Activated T-helper 2 cell treated with anti-CD3 and anti-CD28 coated beads, Interferon-gamma antibody, Interleukin-2, Interleukin-4, amounts not matched to agents 10 μg/mL and 5 μg/mL and 100 μg/mL, durations not matched to agents 14 hours and 24 hours and 36 hours (primary cell): ENCODE measurements at regions of chr5 and their contacts with region 1.

Region 1: GRCh38 chr5:78984439-78985115 is 533 bp downstream of the ARSB start:
- DNase-seq: peak; percentile 80
- H3K4me3 Mint-ChIP-seq: peak overlapping the region; percentile 85
- H3K27ac Mint-ChIP-seq: peak overlapping the region; percentile 87
- H3K4me1 Mint-ChIP-seq: peaks cover 44% of the 10 kb centered on the region
- H3K27me3 Mint-ChIP-seq: no peaks in the 10 kb centered on the region

Region 2: DNA sequence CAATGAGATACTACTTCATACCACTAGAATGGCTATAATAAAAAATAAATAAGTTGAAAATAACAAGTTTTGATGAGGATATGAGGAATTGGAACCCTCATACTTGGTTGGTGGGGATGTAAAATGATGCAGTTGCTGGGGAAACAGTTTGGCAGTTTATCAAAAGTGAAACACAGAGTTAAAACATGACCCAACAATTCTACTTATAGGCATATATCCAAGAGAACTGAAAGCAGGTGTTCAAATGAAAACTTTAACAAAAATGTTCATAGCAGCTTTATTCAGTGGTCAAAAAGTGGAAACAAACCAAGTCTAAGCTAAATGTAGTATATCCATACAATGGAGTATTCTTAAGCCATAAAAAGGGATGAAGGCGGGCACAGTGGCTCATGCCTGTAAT is 322.9 kb before region 1 on chr5:
- intact Hi-C with region 1: no loop called
- DNase-seq: no peak
- H3K4me3 Mint-ChIP-seq: no peak overlapping the region
- H3K27ac Mint-ChIP-seq: no peak overlapping the region
- H3K4me1 Mint-ChIP-seq: no peaks in the 10 kb centered on the region
- H3K27me3 Mint-ChIP-seq: peaks cover 25% of the 10 kb centered on the region

Region 3: GRCh38 chr5:78953092-78953800 is 31.3 kb before region 1 on chr5:
- intact Hi-C with region 1: loop called (anchors 1 kb)
- DNase-seq: no peak
- H3K4me3 Mint-ChIP-seq: no peak overlapping the region
- H3K27ac Mint-ChIP-seq: no peak overlapping the region
- H3K4me1 Mint-ChIP-seq: peaks cover 24% of the 10 kb centered on the region
- H3K27me3 Mint-ChIP-seq: no peaks in the 10 kb centered on the region

Region 4: DNA sequence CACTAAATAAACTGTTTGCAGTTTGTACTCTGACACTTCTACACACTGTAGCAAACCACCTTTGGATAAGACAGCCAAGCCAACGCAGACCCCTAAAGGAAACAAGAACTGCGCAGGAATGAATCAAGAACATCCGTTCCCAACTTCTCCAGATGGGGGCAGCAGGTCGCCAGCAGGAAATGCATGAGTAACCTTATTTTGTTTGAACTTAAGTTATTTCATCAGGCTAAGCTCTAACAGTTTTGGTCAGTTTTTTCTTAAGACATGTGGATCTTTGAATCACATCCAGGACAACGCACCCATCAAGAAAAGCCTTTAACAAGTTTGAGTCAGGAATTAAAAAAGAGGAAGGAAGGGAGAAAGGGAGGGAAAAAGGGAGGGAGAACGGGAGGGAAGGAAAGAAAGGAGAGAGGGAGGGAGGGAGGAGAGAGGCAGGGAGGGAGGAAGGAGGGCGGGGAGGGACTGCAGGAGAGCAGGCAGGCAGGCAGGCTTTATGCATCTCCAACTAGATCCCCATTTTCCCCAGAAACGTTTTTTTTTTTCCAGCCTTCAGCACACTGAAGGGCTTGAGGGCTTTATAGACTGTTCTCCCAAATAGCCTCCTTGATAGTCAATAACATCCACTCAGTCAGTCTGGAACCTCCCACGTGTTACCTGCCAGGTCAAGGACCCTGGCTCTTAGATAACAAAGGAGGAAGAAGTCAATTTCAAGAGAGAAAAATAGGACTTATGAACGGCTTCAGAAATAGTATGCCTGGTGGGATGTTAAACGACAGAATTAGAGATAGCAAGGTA is 149.3 kb after region 1 on chr5:
- intact Hi-C with region 1: loop called (anchors 1 kb)
- DNase-seq: peak; percentile 45
- H3K4me3 Mint-ChIP-seq: peak overlapping the region; percentile 72
- H3K27ac Mint-ChIP-seq: peak overlapping the region; percentile 80
- H3K4me1 Mint-ChIP-seq: peaks cover 8% of the 10 kb centered on the region
- H3K27me3 Mint-ChIP-seq: peaks cover 3% of the 10 kb centered on the region

Region 5: DNA sequence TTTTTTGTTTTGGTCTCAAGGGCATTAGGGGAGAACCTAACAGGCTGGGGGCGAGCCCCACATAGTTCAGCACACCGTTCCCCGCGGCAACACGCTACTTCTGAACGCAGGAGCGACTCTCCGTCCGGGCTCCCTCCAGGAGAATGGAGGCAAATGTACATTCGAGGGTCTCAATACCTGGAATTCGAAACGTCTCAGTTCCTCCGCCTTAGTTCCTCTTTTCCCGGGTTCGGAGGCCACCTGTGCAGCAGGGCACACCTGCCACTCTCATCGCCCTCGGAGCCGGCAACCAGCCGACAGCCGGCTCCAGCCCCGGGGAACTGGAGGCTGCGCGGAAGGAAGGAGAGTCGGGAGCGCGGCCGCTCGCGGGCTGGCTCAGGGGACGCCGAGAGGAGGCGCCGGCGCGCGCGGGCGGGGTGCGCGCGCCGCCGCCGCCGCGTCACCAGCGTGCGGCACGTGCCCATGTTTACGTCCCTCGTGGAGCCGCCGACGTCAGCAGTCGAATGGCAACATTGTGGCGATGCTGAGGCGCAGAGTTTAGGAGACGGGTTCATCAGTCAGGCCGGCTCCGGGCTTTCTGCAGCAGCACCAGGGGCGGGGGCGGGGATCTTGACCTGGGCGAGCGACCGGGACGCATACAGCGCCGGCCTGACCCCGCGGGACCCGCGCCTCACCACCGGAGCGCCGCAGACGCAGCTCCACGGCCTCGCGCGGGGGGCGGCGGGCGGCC is 251.2 kb after region 1 on chr5 and contains the start of gene JMY:
- intact Hi-C with region 1: loop called (anchors 2 kb)
- DNase-seq: peak; percentile 71
- H3K4me3 Mint-ChIP-seq: peak within 1 kb of the TSS; percentile 87
- H3K27ac Mint-ChIP-seq: peak within 1 kb of the TSS; percentile 92
- H3K4me1 Mint-ChIP-seq: peaks cover 22% of the 10 kb centered on the region
- H3K27me3 Mint-ChIP-seq: no peaks in the 10 kb centered on the region
- total RNA-seq, gene JMY: 4.4 and 5.8 TPM in 2 replicates

Region 6: GRCh38 chr5:79982136-79982535 is 997.6 kb after region 1 on chr5:
- intact Hi-C with region 1: loop called (anchors 10 kb)
- DNase-seq: no peak
- H3K4me3 Mint-ChIP-seq: peak overlapping the region; percentile 41
- H3K27ac Mint-ChIP-seq: peak overlapping the region; percentile 74
- H3K4me1 Mint-ChIP-seq: peaks cover 58% of the 10 kb centered on the region
- H3K27me3 Mint-ChIP-seq: no peaks in the 10 kb centered on the region